H1 (cell line): ENCODE measurements at regions of chr10 and their contacts with region 1.

Region 1: DNA sequence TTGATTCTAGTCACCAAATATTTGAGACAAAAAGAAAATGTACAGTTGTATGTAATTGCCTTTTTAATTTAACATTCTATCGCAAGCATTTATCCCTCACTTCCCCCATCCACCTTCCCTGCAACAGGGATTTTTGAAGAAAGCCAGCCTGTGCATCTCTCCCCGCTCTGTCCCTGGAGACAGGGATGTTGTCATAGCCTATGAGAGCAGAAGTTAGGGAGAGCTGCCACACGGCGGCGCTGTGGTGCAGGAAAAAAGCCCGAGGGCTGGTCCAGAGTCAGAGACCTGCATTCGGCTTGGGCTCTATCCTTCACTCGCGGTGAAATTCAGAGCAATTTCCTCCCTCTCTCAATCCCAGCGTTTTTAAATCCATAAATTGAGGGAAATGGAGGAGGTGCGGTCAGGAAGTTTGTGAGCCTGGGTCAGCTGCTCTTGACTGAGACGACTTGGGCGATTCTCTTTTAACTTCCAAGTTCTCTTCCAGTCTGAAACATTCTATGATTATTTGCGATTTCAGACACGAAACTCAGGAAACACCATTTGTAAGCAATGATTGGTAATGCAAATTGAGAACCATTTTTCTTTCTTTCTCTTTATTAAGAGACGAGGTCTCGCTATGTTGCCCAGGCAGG is 17.5 kb downstream of the HKDC1 start:
- DNase-seq: peak; percentile 71 to 98
- H3K4me3 ChIP-seq: no peak overlapping the region
- H3K27ac ChIP-seq: no peak overlapping the region
- H3K4me1 ChIP-seq: peaks cover 0 to 7% (median under 1%) of the 10 kb centered on the region in 4 experiments; a peak in 4 of 7 replicates
- H3K27me3 ChIP-seq: no peaks in the 10 kb centered on the region
- CTCF ChIP-seq: peak; percentile 86 to 97 (median 94)
- EP300 ChIP-seq: no peak
- POLR2A ChIP-seq: no peak
- RAD21 ChIP-seq: peak; percentile 99

Region 2: DNA sequence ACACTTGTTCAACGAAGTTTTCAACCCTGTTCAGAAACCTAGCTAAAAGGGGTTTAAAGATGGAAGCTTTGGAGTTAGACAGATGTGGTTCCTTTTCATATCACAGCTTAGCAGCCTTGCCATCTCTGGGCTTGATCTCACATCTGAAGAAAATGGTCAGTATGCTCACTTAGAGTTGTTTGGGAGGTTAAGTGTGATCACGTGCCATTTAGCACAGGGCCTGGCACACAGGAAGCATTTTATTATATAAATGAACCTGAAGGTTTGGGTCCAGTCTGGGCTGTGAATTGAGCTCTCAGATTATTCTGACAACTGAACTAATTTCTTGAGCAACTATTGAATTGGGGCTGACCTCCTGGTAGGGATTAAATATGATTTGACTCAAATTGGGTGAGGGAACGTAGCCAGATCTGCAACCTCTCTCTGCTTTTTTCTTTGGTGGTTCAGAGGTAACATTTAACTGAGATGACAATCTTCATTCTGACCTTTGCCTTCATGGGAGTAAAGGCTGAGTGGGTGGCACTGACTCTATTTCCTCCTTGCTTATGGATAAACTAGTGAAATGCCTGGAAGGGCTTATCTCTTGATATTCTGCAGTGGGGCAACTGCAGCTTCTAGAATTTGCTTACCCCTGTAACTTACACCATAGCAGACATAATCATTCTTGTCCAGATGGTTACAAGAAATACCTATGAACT is 27.7 kb before region 1 on chr10:
- CTCF ChIA-PET with region 1: no interaction called
- POLR2A ChIA-PET with region 1: no interaction called
- DNase-seq: no peak
- H3K4me3 ChIP-seq: no peak overlapping the region
- H3K27ac ChIP-seq: no peak overlapping the region
- H3K4me1 ChIP-seq: no peaks in the 10 kb centered on the region
- H3K27me3 ChIP-seq: no peaks in the 10 kb centered on the region
- CTCF ChIP-seq: no peak
- EP300 ChIP-seq: no peak
- POLR2A ChIP-seq: no peak
- RAD21 ChIP-seq: no peak

Region 3: GRCh38 chr10:69222157-69223027 is 15.3 kb before region 1 on chr10:
- CTCF ChIA-PET with region 1: interaction called, 13 read pairs
- POLR2A ChIA-PET with region 1: no interaction called
- DNase-seq: peak; percentile 25 to 74
- H3K4me3 ChIP-seq: no peak overlapping the region
- H3K27ac ChIP-seq: 0 out of 2 replicates have a peak overlapping the region, but pooled peaks have one; percentile 21
- H3K4me1 ChIP-seq: peaks cover 4 to 6% (median 5%) of the 10 kb centered on the region in 4 experiments
- H3K27me3 ChIP-seq: no peaks in the 10 kb centered on the region
- CTCF ChIP-seq: peak in 2 of 3 experiments; percentile 65 to 68; a peak in 3 of 4 replicates
- EP300 ChIP-seq: no peak
- POLR2A ChIP-seq: no peak
- RAD21 ChIP-seq: peak; percentile 35 to 53; a peak in 3 of 4 replicates

Region 4: GRCh38 chr10:69360485-69361324 is 123.1 kb after region 1 on chr10:
- CTCF ChIA-PET with region 1: interaction called, 18 read pairs
- POLR2A ChIA-PET with region 1: no interaction called
- DNase-seq: no peak
- H3K4me3 ChIP-seq: no peak overlapping the region
- H3K27ac ChIP-seq: no peak overlapping the region
- H3K4me1 ChIP-seq: peaks cover 2 to 12% (median 6%) of the 10 kb centered on the region in 4 experiments; a peak in 5 of 7 replicates
- H3K27me3 ChIP-seq: no peaks in the 10 kb centered on the region
- CTCF ChIP-seq: no peak
- EP300 ChIP-seq: no peak
- POLR2A ChIP-seq: no peak
- RAD21 ChIP-seq: no peak

Region 5: DNA sequence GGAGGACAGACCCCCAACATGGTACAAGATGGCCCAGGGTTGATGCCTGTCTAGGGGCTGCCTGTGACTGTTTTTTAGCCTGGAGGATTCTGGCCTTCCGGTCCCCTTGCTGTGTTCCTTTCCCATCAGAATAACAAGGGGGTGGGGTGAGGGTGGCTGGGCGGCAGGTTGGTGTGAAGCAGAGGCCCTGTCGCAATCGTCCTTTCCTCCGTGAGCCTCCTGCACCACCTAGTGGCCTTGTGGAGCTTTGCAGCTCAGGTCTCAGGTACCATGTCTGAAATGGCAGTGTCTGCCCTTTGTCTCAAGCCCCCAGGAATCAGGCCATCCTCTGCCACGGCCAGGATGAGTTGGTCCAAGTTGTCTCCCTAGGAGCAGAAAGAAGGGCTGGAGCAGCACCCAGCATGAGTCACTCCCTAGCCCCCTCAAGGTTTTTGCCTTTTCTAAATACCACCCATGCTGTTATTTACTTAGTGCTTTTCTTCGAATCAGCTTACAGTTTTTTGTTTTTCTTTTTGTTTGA is 154.9 kb after region 1 on chr10:
- CTCF ChIA-PET with region 1: interaction called, 50 read pairs
- POLR2A ChIA-PET with region 1: interaction called, 3 read pairs
- DNase-seq: peak; percentile 80 to 91
- H3K4me3 ChIP-seq: no peak overlapping the region
- H3K27ac ChIP-seq: no peak overlapping the region; the same call in 1 of the 2 replicates
- H3K4me1 ChIP-seq: peaks cover 8 to 21% (median 15%) of the 10 kb centered on the region in 4 experiments
- H3K27me3 ChIP-seq: no peaks in the 10 kb centered on the region
- CTCF ChIP-seq: peak; percentile 89 to 99 (median 99)
- EP300 ChIP-seq: no peak
- POLR2A ChIP-seq: no peak; a peak in 2 of 3 replicates
- RAD21 ChIP-seq: peak; percentile 99